ENCODE measurements at regions of chr10 and their contacts with region 1.

Region 1: DNA sequence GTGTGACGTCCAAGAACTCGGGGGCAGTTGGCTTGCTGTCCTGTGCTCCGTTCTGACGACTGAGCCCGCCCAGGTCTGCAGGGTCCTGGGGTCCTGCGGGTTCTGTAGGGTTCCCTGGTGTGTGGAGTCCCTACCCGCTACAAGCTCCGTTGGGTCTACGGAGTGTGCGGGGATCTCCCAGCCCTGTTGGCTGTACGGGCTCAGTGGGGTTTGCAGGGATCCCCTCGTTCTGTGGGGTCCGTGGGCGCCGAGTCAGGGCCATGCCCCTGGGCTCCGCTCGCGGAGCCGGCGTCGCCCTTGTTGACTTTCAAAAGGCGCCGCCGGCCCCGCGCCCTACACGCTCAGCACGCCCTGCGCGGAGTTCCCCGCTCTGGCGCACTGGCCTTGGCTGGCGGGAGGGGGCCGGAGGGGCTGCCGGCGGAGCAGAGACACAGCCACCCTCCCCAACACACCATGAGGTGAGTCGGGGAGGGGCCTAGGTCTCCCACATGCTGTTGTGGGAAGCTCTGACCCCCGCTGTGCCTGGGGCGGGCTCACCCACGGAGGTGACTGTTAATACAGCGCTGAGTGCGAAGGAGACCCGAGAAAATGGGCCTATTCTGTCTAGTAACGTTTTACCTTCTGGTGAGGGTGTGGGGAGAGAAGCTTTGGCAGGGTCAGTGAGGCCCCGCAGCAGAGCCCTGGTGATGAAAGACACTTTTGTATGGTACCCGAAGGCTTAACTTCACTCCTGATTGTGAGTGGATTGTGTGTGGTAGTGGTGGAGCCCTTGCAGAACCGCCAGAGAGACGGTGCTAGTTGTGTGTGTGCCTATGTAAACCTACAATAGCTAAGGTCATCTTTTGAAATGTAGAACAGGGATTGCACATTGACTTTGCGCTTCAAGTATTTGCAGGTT is 8.1 kb downstream of the TASOR2 start:
- DNase-seq: peak; percentile 34
- H3K4me3 Mint-ChIP-seq: peak overlapping the region; percentile 65
- H3K27ac Mint-ChIP-seq: peak overlapping the region; percentile 44
- H3K4me1 Mint-ChIP-seq: peaks cover 19% of the 10 kb centered on the region
- H3K27me3 Mint-ChIP-seq: no peaks in the 10 kb centered on the region
- CTCF ChIP-seq: no peak

Region 2: GRCh38 chr10:5710859-5711258 is 18.1 kb after region 1 on chr10:
- CTCF ChIA-PET with region 1: no interaction called
- POLR2A ChIA-PET with region 1: interaction called, 28 read pairs
- intact Hi-C with region 1: no loop called
- DNase-seq: no peak
- H3K4me3 Mint-ChIP-seq: no peak overlapping the region
- H3K27ac Mint-ChIP-seq: peak overlapping the region; percentile 64
- H3K4me1 Mint-ChIP-seq: peaks cover 34% of the 10 kb centered on the region
- H3K27me3 Mint-ChIP-seq: no peaks in the 10 kb centered on the region
- CTCF ChIP-seq: no peak

Measured in MCF 10A (cell line).